CD4-positive, alpha-beta memory T cell (primary cell): ENCODE measurements at regions of chr2 and their contacts with region 1.

Region 1: GRCh38 chr2:30146438-30147147 is at the start of gene YPEL5:
- DNase-seq: peak; percentile 99 to 100 (median 100)
- H3K4me3 ChIP-seq: peak within 1 kb of the TSS; percentile 49 to 78
- H3K4me3 Mint-ChIP-seq: peak within 1 kb of the TSS; percentile 86 to 94 (median 88)
- H3K27ac ChIP-seq: peak within 1 kb of the TSS; percentile 99
- H3K27ac Mint-ChIP-seq: peak within 1 kb of the TSS; percentile 98 to 100 (median 100)
- H3K4me1 ChIP-seq: peaks cover 54% of the 10 kb centered on the region
- H3K4me1 Mint-ChIP-seq: peaks cover 36 to 73% (median 43%) of the 10 kb centered on the region in 4 donors
- H3K27me3 ChIP-seq: no peaks in the 10 kb centered on the region
- H3K27me3 Mint-ChIP-seq: no peaks in the 10 kb centered on the region
- total RNA-seq, gene YPEL5: 81.5 to 88.4 TPM

Region 2: DNA sequence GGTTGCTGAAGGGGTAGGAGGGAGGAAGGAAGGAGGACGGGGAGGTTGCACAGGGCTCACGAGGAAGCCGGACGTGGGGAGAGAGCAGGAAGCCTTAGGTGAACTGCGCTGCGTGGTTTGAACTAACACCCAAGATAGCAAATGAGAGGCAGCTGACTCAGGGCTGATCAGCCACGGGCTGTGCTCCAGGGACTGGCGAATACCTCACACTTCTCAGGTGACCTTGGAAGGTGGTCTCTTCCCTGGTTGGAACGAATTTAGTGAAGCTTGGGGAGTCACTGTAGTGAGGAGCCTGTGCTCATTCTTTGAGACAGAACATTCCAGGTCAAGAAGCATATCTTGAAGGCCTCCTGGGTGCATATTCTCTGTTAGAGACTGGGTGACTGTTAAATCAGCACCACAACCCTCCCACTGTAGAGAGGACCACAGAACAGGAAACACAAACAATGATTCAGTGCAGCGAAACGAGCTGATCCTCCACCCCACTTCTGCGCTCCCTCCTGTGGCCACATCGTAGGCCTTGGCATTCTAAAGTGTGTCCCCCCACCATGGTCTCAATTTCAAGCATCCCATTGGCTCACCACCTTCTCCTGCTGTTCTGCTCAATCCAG is 1131.7 kb before region 1 on chr2:
- CTCF ChIA-PET with region 1: no interaction called
- POLR2A ChIA-PET with region 1: interaction called, 5 read pairs
- intact Hi-C with region 1: loop called (anchors 10 kb)
- DNase-seq: peak; percentile 75 to 88 (median 80)
- H3K4me3 ChIP-seq: peak overlapping the region; percentile 25 to 48
- H3K4me3 Mint-ChIP-seq: peak overlapping the region; percentile 83 to 95 (median 88)
- H3K27ac ChIP-seq: peak overlapping the region; percentile 86
- H3K27ac Mint-ChIP-seq: peak overlapping the region; percentile 99 to 100 (median 100)
- H3K4me1 ChIP-seq: peaks cover 78% of the 10 kb centered on the region
- H3K4me1 Mint-ChIP-seq: peaks cover 62 to 84% (median 72%) of the 10 kb centered on the region in 4 donors
- H3K27me3 ChIP-seq: no peaks in the 10 kb centered on the region
- H3K27me3 Mint-ChIP-seq: no peaks in the 10 kb centered on the region

Region 3: DNA sequence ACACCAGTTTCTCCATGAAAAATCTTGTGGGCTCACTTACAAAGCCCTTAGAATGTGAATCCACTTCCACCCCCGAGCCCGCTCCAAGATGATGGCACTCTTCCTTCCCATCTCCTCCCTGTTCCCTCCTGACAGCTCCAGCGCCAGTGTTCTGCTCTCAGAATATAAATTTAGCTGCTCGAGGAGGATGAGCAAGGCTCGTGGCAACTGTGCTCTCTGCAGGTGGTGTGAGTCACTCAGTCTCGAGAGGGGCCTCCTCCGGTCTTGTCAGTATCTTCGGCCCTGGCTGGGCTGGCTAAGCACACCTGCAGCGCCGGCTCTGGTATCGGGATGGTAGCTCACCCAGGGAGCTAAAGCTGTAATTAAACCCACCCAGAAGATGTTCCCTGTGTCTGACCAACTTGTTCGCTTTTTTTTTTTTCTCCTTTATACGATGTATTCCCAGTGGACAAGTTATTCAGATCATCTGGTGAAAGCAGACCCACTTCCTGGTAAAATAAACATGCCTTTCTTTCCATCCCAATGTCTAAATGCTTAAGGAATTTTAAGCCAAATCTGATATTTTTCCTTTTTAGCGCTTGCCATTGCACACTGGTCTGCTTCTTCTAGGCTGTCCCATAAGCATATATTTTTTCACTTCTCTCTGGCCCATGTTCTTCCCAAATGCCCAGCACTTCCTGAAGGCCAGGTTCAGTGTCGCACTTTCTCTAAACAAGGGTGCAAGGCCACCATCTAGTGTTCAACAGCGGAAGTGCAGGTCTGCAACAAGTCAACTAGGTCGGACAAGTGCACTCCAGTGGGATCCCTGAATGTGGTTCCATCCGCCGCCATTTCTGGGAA is 31.2 kb before region 1 on chr2:
- CTCF ChIA-PET with region 1: interaction called, 4 read pairs
- POLR2A ChIA-PET with region 1: interaction called, 8 read pairs
- intact Hi-C with region 1: loop called (anchors 2 kb)
- DNase-seq: peak in 4 of 5 donors; percentile 27 to 45 (median 36)
- H3K4me3 ChIP-seq: no peak overlapping the region
- H3K4me3 Mint-ChIP-seq: peak overlapping the region in 1 of 8 donors; percentile 51
- H3K27ac ChIP-seq: no peak overlapping the region
- H3K27ac Mint-ChIP-seq: peak overlapping the region in 4 of 7 donors; percentile 5 to 20 (median 10)
- H3K4me1 ChIP-seq: no peaks in the 10 kb centered on the region
- H3K4me1 Mint-ChIP-seq: peaks cover 0 to 5% (median 3%) of the 10 kb centered on the region in 4 donors
- H3K27me3 ChIP-seq: no peaks in the 10 kb centered on the region
- H3K27me3 Mint-ChIP-seq: peaks cover 8 to 11% of the 10 kb centered on the region in 2 donors

Region 4: GRCh38 chr2:30231212-30231995 is 84.8 kb after region 1 on chr2 and contains the start of gene LBH:
- CTCF ChIA-PET with region 1: interaction called, 16 read pairs
- POLR2A ChIA-PET with region 1: interaction called, 134 read pairs
- intact Hi-C with region 1: loop called (anchors 1 kb)
- DNase-seq: peak; percentile 88 to 91 (median 89)
- H3K4me3 ChIP-seq: peak within 1 kb of the TSS; percentile 63 to 92
- H3K4me3 Mint-ChIP-seq: peak within 1 kb of the TSS; percentile 89 to 99 (median 96)
- H3K27ac ChIP-seq: peak within 1 kb of the TSS; percentile 93
- H3K27ac Mint-ChIP-seq: peak within 1 kb of the TSS; percentile 87 to 97 (median 91)
- H3K4me1 ChIP-seq: peaks cover 64% of the 10 kb centered on the region
- H3K4me1 Mint-ChIP-seq: peaks cover 36 to 76% (median 55%) of the 10 kb centered on the region in 4 donors
- H3K27me3 ChIP-seq: no peaks in the 10 kb centered on the region
- H3K27me3 Mint-ChIP-seq: no peaks in the 10 kb centered on the region
- total RNA-seq, gene LBH: 335 to 364 TPM

Region 5: DNA sequence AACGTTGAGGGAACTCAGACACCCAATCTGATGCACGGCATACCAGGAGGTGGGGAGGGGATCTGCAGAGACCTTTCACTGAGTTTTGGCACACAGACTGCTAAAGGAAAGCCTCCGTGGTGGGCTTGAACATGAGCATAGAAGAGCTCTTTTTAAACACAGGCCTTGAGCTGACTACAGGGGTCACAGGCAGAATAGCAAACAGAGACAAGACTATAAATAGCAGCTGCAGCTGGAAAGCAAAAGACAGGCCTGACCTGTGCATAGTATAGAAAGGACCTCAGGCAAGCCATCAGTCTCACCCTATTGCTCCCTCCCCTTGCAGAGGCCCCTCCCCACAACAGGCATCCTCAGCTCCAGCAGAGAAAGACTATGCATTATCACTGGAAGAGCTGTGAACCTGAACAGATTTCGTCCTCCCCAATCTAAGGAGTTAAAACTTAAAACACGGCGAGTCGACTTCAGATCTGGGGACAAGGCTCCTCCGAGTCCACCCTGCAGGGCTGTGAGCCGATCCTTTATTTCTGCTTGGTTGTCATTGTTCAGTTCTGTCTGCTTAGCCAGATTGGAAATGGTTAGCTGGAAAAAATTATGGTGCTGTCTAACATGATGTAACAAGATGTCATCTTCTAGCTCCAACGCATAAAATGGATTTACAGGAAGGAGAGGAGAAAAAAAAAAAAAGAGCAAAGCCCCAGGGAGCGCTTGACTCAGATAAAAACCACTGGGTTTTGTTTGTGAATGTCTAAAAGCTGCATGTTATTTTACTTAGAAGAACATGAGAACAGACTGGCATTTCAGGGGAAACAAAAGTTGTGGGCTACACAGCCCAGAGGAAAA is 275.2 kb after region 1 on chr2:
- CTCF ChIA-PET with region 1: no interaction called
- POLR2A ChIA-PET with region 1: interaction called, 7 read pairs
- intact Hi-C with region 1: loop called (anchors 5 kb)
- DNase-seq: peak in 4 of 5 donors; percentile 16 to 58 (median 26)
- H3K4me3 ChIP-seq: no peak overlapping the region
- H3K4me3 Mint-ChIP-seq: peak overlapping the region; percentile 23 to 74 (median 61)
- H3K27ac ChIP-seq: peak overlapping the region; percentile 40
- H3K27ac Mint-ChIP-seq: peak overlapping the region; percentile 68 to 93 (median 84)
- H3K4me1 ChIP-seq: peaks cover 33% of the 10 kb centered on the region
- H3K4me1 Mint-ChIP-seq: peaks cover 26 to 47% (median 31%) of the 10 kb centered on the region in 4 donors
- H3K27me3 ChIP-seq: no peaks in the 10 kb centered on the region
- H3K27me3 Mint-ChIP-seq: no peaks in the 10 kb centered on the region

Region 6: GRCh38 chr2:32063310-32064161 is 1916.9 kb after region 1 on chr2 and contains the start of gene SPAST:
- CTCF ChIA-PET with region 1: no interaction called
- POLR2A ChIA-PET with region 1: no interaction called
- intact Hi-C with region 1: loop called (anchors 1 kb)
- DNase-seq: peak; percentile 96 to 97 (median 97)
- H3K4me3 ChIP-seq: peak within 1 kb of the TSS; percentile 93 to 94
- H3K4me3 Mint-ChIP-seq: peak within 1 kb of the TSS; percentile 98 to 99 (median 99)
- H3K27ac ChIP-seq: peak within 1 kb of the TSS; percentile 77
- H3K27ac Mint-ChIP-seq: peak within 1 kb of the TSS; percentile 89 to 98 (median 97)
- H3K4me1 ChIP-seq: peaks cover 41% of the 10 kb centered on the region
- H3K4me1 Mint-ChIP-seq: peaks cover 11 to 43% (median 31%) of the 10 kb centered on the region in 4 donors
- H3K27me3 ChIP-seq: no peaks in the 10 kb centered on the region
- H3K27me3 Mint-ChIP-seq: no peaks in the 10 kb centered on the region
- total RNA-seq, gene SPAST: 22.5 to 23.2 TPM